Activated CD8-positive, alpha-beta T cell treated with anti-CD3 and anti-CD28 coated beads, Interleukin-2, amount 10 ng/mL, durations not matched to agents 7 days and 5 days (primary cell): ENCODE measurements at regions of chr19 and their contacts with region 1.

Region 1: DNA sequence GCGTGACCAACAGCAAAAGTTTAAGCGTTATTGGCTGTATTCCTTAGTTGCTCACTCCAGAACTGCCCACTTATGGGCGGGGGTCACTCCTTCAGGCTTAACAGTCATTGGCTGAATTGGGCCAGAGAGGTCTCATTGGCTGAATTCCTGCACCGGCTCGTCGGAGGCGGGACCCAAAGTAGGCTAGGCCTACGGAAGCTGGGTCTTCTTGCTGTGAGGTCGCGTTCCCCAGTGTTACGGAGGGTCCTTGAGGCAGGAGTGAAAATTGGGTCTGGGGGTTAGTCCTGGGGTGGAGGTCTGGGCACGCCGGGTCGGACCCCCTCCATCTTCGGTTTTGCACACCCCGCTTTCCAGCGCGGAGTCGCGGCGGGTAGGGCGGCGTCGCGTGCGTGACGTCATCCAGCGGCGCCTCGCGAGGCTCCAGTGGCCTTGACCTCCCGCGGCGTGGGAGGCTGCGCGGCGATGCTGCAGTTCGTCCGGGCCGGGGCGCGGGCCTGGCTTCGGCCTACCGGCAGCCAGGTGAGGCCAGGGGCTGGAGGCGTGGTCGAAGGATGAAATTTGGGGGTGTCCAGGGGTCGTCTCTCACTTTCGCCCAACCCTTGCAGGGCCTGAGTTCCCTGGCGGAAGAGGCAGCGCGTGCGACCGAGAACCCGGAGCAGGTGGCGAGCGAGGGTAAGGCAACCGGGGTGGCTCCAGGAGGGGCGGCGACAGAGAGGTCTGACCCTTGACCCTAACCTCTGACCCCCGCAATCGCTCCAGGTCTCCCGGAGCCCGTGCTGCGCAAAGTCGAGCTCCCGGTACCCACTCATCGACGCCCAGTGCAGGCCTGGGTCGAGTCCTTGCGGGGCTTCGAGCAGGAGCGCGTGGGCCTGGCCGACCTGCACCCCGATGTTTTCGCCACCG is at the start of gene MRPL4:
- DNase-seq: peak; percentile 99
- ATAC-seq: peak; percentile 99
- H3K4me3 Mint-ChIP-seq: peak within 1 kb of the TSS; percentile 87
- H3K27ac Mint-ChIP-seq: peak within 1 kb of the TSS; percentile 95
- H3K4me1 Mint-ChIP-seq: peaks cover 32% of the 10 kb centered on the region
- H3K27me3 Mint-ChIP-seq: no peaks in the 10 kb centered on the region
- total RNA-seq, gene MRPL4: 85.9 to 87.0 TPM

Region 2: DNA sequence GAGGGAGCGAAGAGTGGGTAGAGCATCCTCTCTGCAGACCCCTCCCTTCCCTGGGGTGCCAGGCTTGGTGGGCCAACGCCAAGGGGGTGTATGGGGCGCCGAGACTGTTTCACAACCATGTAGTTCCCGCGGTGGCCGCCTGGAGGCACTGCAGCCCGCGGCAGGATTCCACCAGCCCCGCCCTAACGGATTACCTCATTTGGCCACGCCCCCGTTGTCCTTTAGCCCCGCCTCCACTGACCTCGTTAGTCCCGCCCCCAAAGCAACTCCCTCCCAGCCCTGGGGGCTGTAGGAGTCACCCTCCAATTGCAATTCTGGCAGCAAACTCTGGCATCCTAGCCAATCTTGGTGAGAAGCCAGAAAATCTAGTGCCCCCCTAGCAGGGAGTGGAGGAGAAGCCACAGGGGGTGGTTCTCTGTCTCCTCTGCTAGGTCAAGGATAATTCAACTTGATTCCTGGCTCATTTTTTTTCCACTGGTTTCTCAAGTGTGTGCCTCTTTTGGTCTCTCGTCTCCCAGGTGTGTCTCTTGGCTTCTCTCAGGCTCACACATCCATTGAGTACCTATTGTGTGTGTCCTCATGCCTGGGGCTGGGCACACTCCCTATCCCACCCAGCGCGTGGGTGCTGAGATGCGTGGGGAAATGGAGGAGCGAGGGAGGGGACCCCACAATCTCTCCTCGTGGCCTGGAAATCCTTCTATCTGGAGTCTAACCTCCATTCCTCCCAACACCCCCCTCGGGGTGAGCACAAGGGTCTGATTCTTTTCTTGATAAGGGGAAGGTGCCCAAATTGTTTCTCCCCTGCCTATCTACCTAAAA is 317.7 kb before region 1 on chr19:
- CTCF ChIA-PET with region 1: interaction called, 19 read pairs
- POLR2A ChIA-PET with region 1: no interaction called
- DNase-seq: peak; percentile 87
- ATAC-seq: peak; percentile 72
- H3K4me3 Mint-ChIP-seq: no peak overlapping the region
- H3K27ac Mint-ChIP-seq: no peak overlapping the region
- H3K4me1 Mint-ChIP-seq: peaks cover 27% of the 10 kb centered on the region
- H3K27me3 Mint-ChIP-seq: peaks cover 41% of the 10 kb centered on the region

Region 3: DNA sequence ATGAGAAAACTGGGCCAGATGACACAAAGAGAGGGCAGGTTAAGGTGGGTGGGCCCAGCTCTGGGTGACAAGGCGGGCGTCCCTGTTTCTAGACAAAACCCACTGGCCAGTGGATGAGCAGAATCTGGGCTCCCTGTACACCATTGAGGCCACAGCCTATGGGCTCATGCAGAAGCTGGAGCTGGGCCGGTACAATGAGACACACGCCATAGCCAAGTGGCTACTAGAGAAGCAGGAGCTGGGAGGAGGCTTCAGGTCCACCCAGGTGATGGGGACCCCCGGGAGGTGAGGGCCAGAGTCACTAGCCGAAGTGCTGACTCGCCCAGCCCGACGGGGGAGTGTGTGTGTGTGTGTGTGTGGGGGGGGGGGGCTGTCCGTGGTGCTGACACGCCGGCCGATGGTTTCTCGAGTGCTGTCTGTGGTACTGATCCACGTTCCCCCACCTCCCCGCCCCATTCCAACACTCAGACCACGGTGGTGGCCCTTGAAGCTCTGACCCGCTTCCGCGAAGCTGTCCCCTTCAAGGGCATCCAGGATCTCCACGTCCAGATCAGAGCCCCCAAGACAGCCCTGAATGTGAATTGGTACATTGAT is 190.2 kb before region 1 on chr19:
- CTCF ChIA-PET with region 1: no interaction called
- POLR2A ChIA-PET with region 1: no interaction called
- DNase-seq: peak; percentile 28
- ATAC-seq: no peak
- H3K4me3 Mint-ChIP-seq: no peak overlapping the region
- H3K27ac Mint-ChIP-seq: no peak overlapping the region
- H3K4me1 Mint-ChIP-seq: no peaks in the 10 kb centered on the region
- H3K27me3 Mint-ChIP-seq: peaks cover 4% of the 10 kb centered on the region

Region 4: DNA sequence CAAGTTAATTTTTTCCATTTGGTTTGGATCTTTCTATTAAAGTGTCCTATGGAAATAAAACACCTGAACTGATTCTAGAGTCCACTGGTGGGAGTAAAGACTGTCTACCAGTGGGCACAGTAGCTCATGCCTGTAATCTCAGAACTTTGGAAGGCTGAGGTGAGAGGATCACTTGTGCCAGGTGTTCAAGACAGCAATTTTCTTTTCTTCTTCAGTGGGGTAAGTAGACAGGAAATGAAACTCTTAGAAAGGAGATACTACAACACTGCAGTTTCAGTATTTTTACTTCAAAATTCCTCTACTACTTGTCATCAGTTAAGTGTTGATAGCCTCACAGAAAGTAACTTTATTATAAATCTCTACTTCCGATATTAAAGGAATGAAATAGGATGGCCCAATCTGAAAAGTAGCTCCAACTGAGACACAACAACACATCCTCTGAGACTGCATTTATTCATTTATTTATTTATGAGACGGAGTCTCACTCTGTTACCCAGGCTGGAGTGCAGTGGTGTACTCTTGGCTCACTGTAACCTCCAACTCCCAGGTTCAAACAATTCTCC is 83.6 kb before region 1 on chr19:
- CTCF ChIA-PET with region 1: interaction called, 10 read pairs
- POLR2A ChIA-PET with region 1: interaction called, 3 read pairs
- DNase-seq: no peak
- ATAC-seq: no peak
- H3K4me3 Mint-ChIP-seq: no peak overlapping the region
- H3K27ac Mint-ChIP-seq: peak overlapping the region; percentile 66
- H3K4me1 Mint-ChIP-seq: peaks cover 9% of the 10 kb centered on the region
- H3K27me3 Mint-ChIP-seq: no peaks in the 10 kb centered on the region

Region 5: DNA sequence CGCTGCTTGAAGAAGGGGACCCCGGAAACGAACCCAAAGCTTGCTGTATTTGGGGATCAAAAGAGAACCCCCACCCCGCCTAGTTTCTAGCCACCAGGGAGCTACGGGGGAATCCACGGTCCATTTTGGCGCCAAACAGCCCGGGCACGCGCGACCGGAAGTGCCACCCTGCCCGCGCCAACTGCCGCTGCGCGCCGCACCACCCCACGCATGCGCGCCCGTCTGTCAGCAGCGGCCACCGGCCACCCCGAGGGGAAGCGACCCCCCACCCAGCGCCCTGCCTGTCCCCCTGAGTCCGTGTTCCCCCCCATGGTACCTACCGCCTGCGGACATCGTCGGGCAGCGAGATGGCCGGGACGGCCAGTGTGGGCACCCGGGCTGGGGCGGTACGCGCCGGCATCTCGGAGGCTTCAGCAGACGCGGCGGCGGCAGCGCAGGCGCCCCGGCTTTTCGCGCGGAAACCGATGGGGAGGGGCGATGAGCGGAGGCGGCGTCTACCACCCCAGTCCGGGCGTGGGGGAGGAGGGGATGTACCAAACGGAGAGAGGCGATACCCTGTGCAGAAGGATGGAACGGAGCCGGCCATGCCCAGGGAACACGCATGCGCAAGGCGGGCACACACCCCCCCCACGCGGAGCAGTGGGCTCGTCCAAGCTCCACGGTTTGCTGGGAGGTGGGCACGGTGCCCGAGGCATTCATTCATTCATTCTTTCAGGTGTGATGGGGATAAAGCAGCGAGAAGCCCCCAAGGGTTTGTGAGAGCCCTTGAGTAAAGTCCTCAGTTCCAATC is 57.3 kb before region 1 on chr19 and contains the start of gene DNMT1:
- CTCF ChIA-PET with region 1: interaction called, 33 read pairs
- POLR2A ChIA-PET with region 1: interaction called, 7 read pairs
- DNase-seq: peak; percentile 99
- ATAC-seq: peak; percentile 97
- H3K4me3 Mint-ChIP-seq: peak within 1 kb of the TSS; percentile 89
- H3K27ac Mint-ChIP-seq: peak within 1 kb of the TSS; percentile 97
- H3K4me1 Mint-ChIP-seq: peaks cover 50% of the 10 kb centered on the region
- H3K27me3 Mint-ChIP-seq: no peaks in the 10 kb centered on the region
- total RNA-seq, gene DNMT1: 408 to 412 TPM

Region 6: GRCh38 chr19:10206226-10206885 is 45.7 kb before region 1 on chr19:
- CTCF ChIA-PET with region 1: interaction called, 12 read pairs
- POLR2A ChIA-PET with region 1: interaction called, 6 read pairs
- DNase-seq: no peak
- ATAC-seq: no peak
- H3K4me3 Mint-ChIP-seq: no peak overlapping the region
- H3K27ac Mint-ChIP-seq: no peak overlapping the region
- H3K4me1 Mint-ChIP-seq: peaks cover 5% of the 10 kb centered on the region
- H3K27me3 Mint-ChIP-seq: peaks cover 4% of the 10 kb centered on the region

Region 7: DNA sequence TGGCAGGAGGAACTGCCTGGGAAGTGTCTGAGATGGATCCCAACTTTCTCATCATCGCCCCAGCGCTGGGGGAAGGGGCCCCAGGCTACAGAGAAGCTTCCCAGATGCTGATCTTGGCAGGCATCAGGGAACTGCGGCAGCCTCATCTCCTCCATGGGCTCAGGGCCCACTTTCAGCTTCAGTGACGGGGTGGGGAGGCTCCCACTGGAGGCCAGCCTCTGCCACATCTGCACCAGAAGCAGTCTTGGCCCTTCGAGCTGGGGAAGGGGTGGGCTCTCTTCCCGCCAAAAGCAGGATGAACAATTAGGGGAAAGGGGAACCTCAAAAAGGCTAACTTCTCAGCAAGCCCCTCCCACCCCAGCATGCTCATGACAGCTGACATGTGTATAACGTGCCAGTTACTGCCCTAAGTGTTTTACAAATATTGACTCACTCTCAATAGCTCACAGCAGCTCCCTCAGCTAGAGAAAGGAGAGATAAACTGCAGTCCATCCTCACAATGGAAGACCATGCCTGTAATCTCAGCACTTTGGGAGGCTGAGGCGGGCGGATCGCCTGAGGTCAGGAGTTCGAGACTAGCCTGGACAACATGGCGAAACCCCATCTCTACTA is 13.8 kb before region 1 on chr19:
- CTCF ChIA-PET with region 1: interaction called, 31 read pairs
- POLR2A ChIA-PET with region 1: interaction called, 8 read pairs
- DNase-seq: no peak
- ATAC-seq: no peak
- H3K4me3 Mint-ChIP-seq: no peak overlapping the region
- H3K27ac Mint-ChIP-seq: peak overlapping the region; percentile 30
- H3K4me1 Mint-ChIP-seq: peaks cover 27% of the 10 kb centered on the region
- H3K27me3 Mint-ChIP-seq: no peaks in the 10 kb centered on the region

Region 8: DNA sequence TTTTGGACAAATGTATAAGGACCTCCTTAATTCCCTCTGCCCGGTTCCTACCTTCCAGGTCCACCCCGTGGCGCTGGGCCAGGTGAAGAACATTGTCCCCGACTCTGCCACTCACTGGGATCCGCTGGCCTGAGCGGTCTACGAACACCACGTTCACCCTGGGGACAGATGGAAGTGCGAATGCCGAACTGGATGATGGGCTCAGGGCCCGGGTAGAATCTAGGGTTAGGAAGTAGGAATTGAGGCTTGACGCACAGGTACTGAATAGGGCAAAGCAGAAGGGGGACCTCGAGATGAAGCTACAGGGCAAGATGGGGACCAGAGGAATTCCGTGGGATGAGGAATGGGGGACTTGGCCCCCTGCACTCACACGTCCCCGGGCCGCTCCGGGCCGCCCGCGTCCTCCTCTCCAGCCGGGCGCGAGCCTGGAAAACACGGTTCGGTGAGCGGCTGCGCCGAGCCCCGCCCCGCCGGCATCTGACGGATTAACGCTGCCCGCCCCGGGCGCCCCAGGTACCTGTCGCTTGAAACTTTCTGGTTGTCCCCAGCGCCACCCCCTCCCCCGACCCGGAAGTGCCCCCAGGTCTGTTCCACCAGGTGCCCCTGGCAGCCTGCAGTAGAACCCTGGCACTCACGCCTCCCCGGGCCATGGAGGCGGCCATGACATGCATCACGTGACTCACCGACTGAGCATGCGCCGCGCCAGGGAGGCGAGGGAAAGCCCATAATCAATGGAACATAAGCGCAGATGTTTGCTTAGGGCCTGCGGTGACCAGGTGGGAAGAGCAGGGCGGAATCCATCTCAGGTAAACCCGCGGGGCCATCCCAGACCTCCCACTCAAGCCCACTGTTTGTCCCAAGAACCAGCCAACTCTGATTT is 63.5 kb after region 1 on chr19 and contains the start of gene FDX2:
- CTCF ChIA-PET with region 1: no interaction called
- POLR2A ChIA-PET with region 1: no interaction called
- DNase-seq: peak; percentile 91
- ATAC-seq: peak; percentile 87
- H3K4me3 Mint-ChIP-seq: peak within 1 kb of the TSS; percentile 83
- H3K27ac Mint-ChIP-seq: peak within 1 kb of the TSS; percentile 74
- H3K4me1 Mint-ChIP-seq: peaks cover 17% of the 10 kb centered on the region
- H3K27me3 Mint-ChIP-seq: no peaks in the 10 kb centered on the region
- total RNA-seq, gene FDX2: 8.2 to 9.4 TPM